ENCODE measurements at regions of chr5 and their contacts with region 1.

Region 1: DNA sequence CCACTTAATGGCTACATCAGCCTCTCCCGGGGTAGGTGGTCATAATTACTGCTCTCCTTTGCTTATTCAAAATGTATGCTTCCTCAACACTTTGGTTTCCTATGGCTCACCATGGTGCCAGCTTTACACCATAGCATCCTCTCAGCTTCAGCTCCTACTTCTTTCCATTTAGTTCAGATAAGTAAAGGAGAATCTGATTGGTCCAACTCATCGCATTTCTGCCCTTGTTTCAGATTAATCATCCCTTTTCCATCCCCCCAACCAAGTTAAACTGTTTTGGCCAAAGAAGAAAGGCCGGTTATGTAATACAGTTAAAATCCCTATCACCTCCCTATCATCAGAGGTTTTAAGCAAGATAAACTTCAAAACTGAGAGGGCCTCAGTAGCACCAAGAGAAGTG is 130.5 kb downstream of the CETN3 start:
- DNase-seq: no peak

Region 2: GRCh38 chr5:90386099-90386710 is 107.1 kb after region 1 on chr5:
- intact Hi-C with region 1: loop called (anchors 10 kb)
- DNase-seq: no peak

Measured in posterior cingulate gyrus (tissue), 11 donors.